Activated CD4-positive, alpha-beta T cell treated with anti-CD3 and anti-CD28 coated beads, Interleukin-2, amount 10 ng/mL, durations not matched to agents 7 days and 5 days (primary cell): ENCODE measurements at regions of chr1 and their contacts with region 1.

Region 1: GRCh38 chr1:227952374-227953021 is 4.8 kb upstream of the WNT9A start:
- DNase-seq: no peak
- H3K4me3 Mint-ChIP-seq: no peak overlapping the region
- H3K27ac Mint-ChIP-seq: no peak overlapping the region
- H3K4me1 Mint-ChIP-seq: peaks cover 5% of the 10 kb centered on the region
- H3K27me3 Mint-ChIP-seq: peaks cover 47% of the 10 kb centered on the region

Region 2: GRCh38 chr1:227766015-227766630 is 186.4 kb before region 1 on chr1:
- CTCF ChIA-PET with region 1: interaction called, 19 read pairs
- POLR2A ChIA-PET with region 1: no interaction called
- DNase-seq: peak; percentile 89
- H3K4me3 Mint-ChIP-seq: peak overlapping the region; percentile 52
- H3K27ac Mint-ChIP-seq: peak overlapping the region; percentile 91
- H3K4me1 Mint-ChIP-seq: peaks cover 76% of the 10 kb centered on the region
- H3K27me3 Mint-ChIP-seq: no peaks in the 10 kb centered on the region